ENCODE measurements at regions of chr17 and their contacts with region 1.

Region 1: GRCh38 chr17:66200685-66201092 is 8.8 kb upstream of the CEP112 start:
- DNase-seq: peak; percentile 66
- H3K4me3 ChIP-seq: no peak overlapping the region
- H3K27ac ChIP-seq: no peak overlapping the region
- H3K4me1 ChIP-seq: no peaks in the 10 kb centered on the region
- H3K27me3 ChIP-seq: no peaks in the 10 kb centered on the region
- CTCF ChIP-seq: peak; percentile 67 to 70

Region 2: GRCh38 chr17:66177048-66177447 is 23.6 kb before region 1 on chr17:
- CTCF ChIA-PET with region 1: no interaction called
- dilution Hi-C with region 1: no loop called
- in situ Hi-C with region 1: no loop called
- intact Hi-C with region 1: no loop called
- DNase-seq: no peak
- H3K4me3 ChIP-seq: no peak overlapping the region
- H3K27ac ChIP-seq: no peak overlapping the region
- H3K4me1 ChIP-seq: no peaks in the 10 kb centered on the region
- H3K27me3 ChIP-seq: no peaks in the 10 kb centered on the region
- CTCF ChIP-seq: no peak

Region 3: DNA sequence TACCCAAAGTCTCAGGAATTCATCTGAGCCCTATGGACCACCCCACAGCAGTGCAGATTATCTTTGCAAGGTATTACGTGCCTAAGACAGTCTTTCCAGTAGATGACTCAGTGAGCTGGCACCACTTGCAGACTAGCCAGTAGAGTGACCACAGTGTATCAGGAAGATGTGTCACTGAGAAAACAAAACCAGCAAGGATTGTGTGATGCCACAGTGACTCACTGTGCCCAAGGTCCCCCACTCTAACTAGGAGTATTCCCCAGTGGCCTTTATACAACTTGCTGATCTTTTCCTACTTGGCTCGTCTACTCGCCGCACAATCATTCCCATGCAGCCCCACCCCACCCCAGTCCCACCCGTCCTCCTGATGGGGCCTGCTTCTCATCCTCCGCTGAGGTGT is 75.0 kb after region 1 on chr17:
- CTCF ChIA-PET with region 1: no interaction called
- dilution Hi-C with region 1: no loop called
- in situ Hi-C with region 1: no loop called
- intact Hi-C with region 1: loop called (anchors 2 kb)
- DNase-seq: peak; percentile 94
- H3K4me3 ChIP-seq: no peak overlapping the region
- H3K27ac ChIP-seq: no peak overlapping the region
- H3K4me1 ChIP-seq: peaks cover 36% of the 10 kb centered on the region
- H3K27me3 ChIP-seq: no peaks in the 10 kb centered on the region
- CTCF ChIP-seq: peak in 1 of 2 donors; percentile 24

Region 4: DNA sequence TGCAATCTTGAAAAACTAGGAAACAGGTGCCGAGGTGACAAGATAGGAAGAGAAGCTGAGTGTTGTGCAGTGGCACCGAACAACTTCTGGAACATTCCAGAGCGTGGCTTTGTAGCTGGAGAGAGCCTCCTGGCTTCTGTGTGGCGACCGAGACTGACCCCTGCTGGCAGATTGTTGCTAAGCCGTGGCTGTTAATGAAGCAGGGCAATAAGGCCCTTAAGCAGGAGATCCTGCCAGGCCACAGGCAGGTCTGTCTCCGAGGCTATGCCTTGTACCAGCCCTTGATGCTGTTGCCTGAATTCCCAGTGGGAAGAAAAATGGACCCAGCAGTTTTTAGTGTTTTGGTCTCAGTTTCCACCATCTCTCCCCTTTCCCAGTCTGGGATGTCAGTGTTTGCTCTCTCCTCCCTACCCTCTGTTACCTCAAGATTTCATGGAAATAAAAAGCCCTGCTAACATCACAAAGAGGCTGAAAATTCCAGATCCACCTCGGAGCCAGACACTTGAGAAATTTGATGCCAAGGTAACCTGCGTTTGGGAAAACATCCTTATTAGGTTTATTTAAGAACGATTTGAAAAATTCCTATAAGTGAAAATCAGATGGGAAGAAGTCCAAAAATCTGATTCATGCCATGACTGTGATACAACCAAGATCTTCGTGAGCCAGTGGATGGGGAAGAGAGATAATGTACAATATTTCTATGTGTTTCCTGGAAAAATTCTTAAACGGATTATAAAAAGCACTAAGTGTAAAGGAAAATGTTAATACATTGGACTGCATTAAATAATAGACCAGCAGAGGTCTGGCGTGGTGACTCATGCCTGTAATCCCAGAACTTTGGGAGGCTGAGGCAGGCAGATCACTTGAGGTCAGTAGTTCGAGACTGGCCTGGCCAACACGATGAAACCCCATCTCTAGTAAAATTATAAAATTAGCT is 366.8 kb after region 1 on chr17:
- CTCF ChIA-PET with region 1: no interaction called
- dilution Hi-C with region 1: no loop called
- in situ Hi-C with region 1: loop called in 1 of 2 experiments (anchors 10 kb)
- intact Hi-C with region 1: loop called (anchors 1 kb)
- DNase-seq: peak; percentile 68
- H3K4me3 ChIP-seq: no peak overlapping the region
- H3K27ac ChIP-seq: peak overlapping the region; percentile 5
- H3K4me1 ChIP-seq: peaks cover 13% of the 10 kb centered on the region
- H3K27me3 ChIP-seq: no peaks in the 10 kb centered on the region
- CTCF ChIP-seq: peak; percentile 92 to 97

Region 5: DNA sequence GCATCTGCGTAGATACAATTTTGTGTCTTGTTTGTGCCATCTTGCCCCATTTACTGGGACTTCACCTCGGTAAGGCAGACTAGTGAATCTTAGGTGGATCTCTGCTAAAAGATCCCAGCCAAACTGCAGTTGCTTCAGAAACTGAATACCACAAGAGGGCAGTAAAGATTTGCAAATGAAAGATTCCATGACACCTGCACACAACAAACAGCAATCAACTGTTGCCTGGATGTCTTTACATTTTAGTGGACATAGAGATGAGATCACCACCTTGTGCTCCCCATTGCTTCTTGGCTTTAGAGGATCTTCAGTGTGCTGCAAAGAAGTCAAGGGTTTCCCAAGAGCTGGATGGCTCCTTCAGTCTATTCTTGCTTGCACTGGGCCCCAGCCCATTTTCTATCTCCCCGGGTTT is 515.1 kb after region 1 on chr17:
- CTCF ChIA-PET with region 1: no interaction called
- dilution Hi-C with region 1: no loop called
- in situ Hi-C with region 1: no loop called
- intact Hi-C with region 1: loop called (anchors 5 kb)
- DNase-seq: peak; percentile 61
- H3K4me3 ChIP-seq: no peak overlapping the region
- H3K27ac ChIP-seq: no peak overlapping the region
- H3K4me1 ChIP-seq: peaks cover 17% of the 10 kb centered on the region
- H3K27me3 ChIP-seq: no peaks in the 10 kb centered on the region
- CTCF ChIP-seq: peak; percentile 58 to 77

Region 6: GRCh38 chr17:66906321-66907278 is 705.9 kb after region 1 on chr17:
- CTCF ChIA-PET with region 1: no interaction called
- dilution Hi-C with region 1: no loop called
- in situ Hi-C with region 1: loop called (anchors 10 to 25 kb)
- intact Hi-C with region 1: loop called (anchors 1 kb)
- DNase-seq: peak; percentile 59
- H3K4me3 ChIP-seq: no peak overlapping the region
- H3K27ac ChIP-seq: no peak overlapping the region
- H3K4me1 ChIP-seq: peaks cover 19% of the 10 kb centered on the region
- H3K27me3 ChIP-seq: no peaks in the 10 kb centered on the region
- CTCF ChIP-seq: peak; percentile 96 to 97

Measured in mammary epithelial cell (primary cell).